ENCODE measurements at regions of chr15 and their contacts with region 1.

Region 1: DNA sequence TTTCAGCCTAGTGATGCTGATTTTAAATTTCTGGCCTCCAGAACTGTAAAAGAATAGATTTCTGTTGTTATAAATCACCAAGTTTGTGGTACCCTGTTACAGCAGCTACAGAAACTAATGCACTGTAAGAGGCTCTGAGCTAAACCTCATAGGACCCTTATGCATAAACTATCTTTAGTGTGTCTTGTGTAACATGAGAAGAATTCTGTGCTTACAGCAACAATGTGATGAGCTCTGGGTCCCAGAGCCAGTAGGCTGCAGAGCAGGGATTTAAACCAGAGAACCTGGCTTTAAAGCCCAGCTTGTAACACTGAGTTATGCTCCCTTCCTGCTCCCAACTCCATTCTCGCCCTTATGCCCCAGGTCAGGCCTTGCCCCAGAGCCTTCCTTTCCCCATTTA is 113.1 kb downstream of the THSD4 start:
- DNase-seq: peak; percentile 24
- H3K4me3 ChIP-seq: no peak overlapping the region
- H3K27ac ChIP-seq: peak overlapping the region; percentile 50
- H3K27me3 ChIP-seq: no peaks in the 10 kb centered on the region
- CTCF ChIP-seq: no peak

Region 2: DNA sequence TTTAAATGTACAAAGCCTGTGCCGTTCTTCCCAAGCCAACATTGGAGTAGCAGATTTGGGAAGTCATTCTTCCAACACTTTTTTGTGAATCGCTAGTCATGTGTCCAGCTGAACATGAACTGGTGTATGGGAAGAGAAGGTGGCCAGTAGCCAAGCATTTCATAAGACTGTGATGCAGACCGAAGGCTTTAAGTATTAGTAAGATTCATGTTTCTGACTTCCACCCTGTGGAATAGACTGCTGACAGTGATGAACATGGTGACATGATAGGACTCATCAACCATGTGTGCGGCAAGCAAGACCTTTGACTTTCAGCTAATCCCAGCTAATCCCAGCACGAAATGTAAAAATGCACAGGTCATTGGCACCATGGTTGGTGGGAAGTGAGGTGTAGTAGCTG is 161.4 kb before region 1 on chr15:
- CTCF ChIA-PET with region 1: no interaction called
- POLR2A ChIA-PET with region 1: no interaction called
- DNase-seq: peak; percentile 88
- H3K4me3 ChIP-seq: no peak overlapping the region
- H3K27ac ChIP-seq: peak overlapping the region; percentile 40
- H3K27me3 ChIP-seq: no peaks in the 10 kb centered on the region
- CTCF ChIP-seq: no peak

Region 3: DNA sequence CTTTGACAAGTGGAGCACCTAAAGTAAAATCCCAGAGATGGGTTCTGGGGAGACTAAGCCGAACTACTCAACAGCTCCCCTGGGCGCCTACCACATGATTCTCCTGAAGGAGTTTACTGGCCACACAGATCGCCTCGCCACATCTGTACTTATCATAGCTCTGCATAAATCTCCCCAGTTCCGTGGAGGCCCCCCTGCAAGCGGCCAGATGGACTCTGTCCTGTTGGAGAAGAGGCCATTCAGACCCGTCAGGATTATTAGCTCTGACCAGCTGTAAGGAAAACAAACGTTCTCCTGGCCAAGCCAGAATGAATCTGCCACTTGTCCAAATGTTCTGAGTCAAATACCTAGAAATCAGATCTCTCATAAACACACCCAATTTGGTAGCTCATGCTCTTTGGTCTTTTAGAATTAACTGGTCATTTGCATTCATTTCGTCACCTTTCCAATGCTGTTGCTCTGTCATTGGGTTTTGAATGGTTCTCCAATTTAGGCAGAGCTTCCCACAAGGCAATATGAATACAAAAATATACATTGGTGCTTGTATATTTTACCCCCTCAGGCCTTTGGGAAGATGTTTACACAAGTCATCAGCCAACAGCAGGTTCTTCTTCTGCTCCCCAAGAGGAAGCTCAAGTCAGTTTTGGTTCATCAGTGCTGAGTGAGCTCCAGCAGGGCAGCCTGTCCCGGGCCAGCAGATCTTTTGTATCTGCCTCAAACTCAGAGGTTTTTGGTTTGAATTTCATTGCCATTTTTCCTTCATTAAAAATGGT is 11.4 kb after region 1 on chr15:
- CTCF ChIA-PET with region 1: no interaction called
- POLR2A ChIA-PET with region 1: interaction called, 10 read pairs
- DNase-seq: peak; percentile 39
- H3K4me3 ChIP-seq: no peak overlapping the region
- H3K27ac ChIP-seq: peak overlapping the region; percentile 58
- H3K27me3 ChIP-seq: no peaks in the 10 kb centered on the region
- CTCF ChIP-seq: no peak

Region 4: GRCh38 chr15:71301958-71302621 is 73.7 kb after region 1 on chr15:
- CTCF ChIA-PET with region 1: no interaction called
- POLR2A ChIA-PET with region 1: no interaction called
- DNase-seq: no peak
- H3K4me3 ChIP-seq: no peak overlapping the region
- H3K27ac ChIP-seq: peak overlapping the region; percentile 77
- H3K27me3 ChIP-seq: no peaks in the 10 kb centered on the region
- CTCF ChIP-seq: no peak

Region 5: DNA sequence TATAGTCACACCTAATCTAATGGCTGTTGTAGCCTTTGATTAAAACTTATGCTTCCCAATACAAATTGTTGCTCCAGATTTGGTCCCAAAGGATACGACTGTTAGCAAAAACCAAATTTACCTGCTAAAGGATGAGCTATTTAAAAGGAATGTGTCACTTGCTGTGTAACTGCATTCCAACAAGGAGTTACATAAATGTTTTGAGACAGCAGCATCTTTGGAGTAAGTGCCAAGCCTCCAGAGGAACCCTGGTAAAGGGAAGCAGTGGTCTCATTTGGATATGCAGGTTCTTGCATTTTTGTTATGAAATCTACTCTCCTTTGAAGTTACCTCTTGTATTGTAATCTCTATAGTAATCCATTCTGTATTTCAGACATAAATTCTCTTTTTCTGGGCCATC is 120.2 kb after region 1 on chr15:
- CTCF ChIA-PET with region 1: no interaction called
- POLR2A ChIA-PET with region 1: interaction called, 10 read pairs
- DNase-seq: no peak
- H3K4me3 ChIP-seq: no peak overlapping the region
- H3K27ac ChIP-seq: no peak overlapping the region
- H3K27me3 ChIP-seq: no peaks in the 10 kb centered on the region
- CTCF ChIP-seq: no peak

Measured in AG04450 (cell line).